ENCODE measurements at regions of chr2 and their contacts with region 1.

Region 1: DNA sequence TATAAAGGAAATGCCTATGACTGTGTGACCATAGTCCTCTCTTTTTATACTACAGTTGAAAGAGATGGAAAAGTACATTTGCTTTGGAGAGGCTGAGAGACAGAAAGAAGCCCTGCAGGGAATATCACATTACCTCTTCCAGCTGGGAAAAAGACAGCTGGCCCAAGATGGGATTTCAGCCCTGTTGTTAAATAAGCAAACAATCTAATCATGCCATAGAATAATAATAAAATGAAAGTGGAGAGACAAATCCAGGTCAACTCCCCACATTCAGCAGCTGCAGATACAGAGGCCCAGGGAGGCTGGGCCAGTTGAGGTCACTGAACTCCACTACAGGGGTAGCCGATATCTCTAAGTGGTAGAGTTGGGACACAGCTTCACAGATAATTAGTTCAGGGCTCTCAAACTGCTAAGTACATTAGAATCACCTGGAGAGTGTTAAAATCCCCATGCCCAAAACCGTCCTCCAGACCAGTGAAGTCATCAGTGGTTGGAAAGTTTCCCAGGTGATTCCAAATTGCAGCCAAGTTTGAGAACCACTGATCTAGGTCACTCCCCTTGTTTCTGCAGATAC is 81.9 kb downstream of the MOGAT1 start:
- DNase-seq: no peak
- H3K4me3 ChIP-seq: no peak overlapping the region
- H3K27me3 ChIP-seq: no peaks in the 10 kb centered on the region
- CTCF ChIP-seq: no peak

Region 2: GRCh38 chr2:222743251-222743812 is 10.0 kb before region 1 on chr2:
- CTCF ChIA-PET with region 1: interaction called, 3 read pairs
- POLR2A ChIA-PET with region 1: interaction called, 11 read pairs
- DNase-seq: no peak
- H3K4me3 ChIP-seq: no peak overlapping the region
- H3K27me3 ChIP-seq: no peaks in the 10 kb centered on the region
- CTCF ChIP-seq: no peak

Region 3: GRCh38 chr2:222892321-222892720 is 139.0 kb after region 1 on chr2:
- CTCF ChIA-PET with region 1: no interaction called
- POLR2A ChIA-PET with region 1: interaction called, 22 read pairs
- DNase-seq: no peak
- H3K4me3 ChIP-seq: no peak overlapping the region
- H3K27me3 ChIP-seq: no peaks in the 10 kb centered on the region
- CTCF ChIP-seq: no peak

Region 4: GRCh38 chr2:222959336-222959735 is 206.0 kb after region 1 on chr2:
- CTCF ChIA-PET with region 1: no interaction called
- POLR2A ChIA-PET with region 1: no interaction called
- DNase-seq: peak; percentile 75
- H3K4me3 ChIP-seq: no peak overlapping the region
- H3K27me3 ChIP-seq: no peaks in the 10 kb centered on the region
- CTCF ChIP-seq: peak; percentile 74